Ovary (tissue), 10 donors: ENCODE measurements at regions of chr1 and their contacts with region 1.

Region 1: GRCh38 chr1:51768971-51769588 is 109.4 kb downstream of the NRDC start:
- DNase-seq: peak in 2 of 5 donors; percentile 18 to 57
- H3K4me3 ChIP-seq: no peak overlapping the region
- H3K27ac ChIP-seq: no peak overlapping the region
- H3K4me1 ChIP-seq: peaks cover 3% of the 10 kb centered on the region
- H3K27me3 ChIP-seq: no peaks in the 10 kb centered on the region
- CTCF ChIP-seq: peak; percentile 69 to 81 (median 76)
- EP300 ChIP-seq: no peak
- POLR2A ChIP-seq: no peak

Region 2: GRCh38 chr1:51616901-51617708 is 152.0 kb before region 1 on chr1 and contains the start of gene OSBPL9:
- intact Hi-C with region 1: loop called (anchors 10 kb)
- DNase-seq: peak; percentile 91 to 93 (median 91)
- H3K4me3 ChIP-seq: peak within 1 kb of the TSS; percentile 85
- H3K27ac ChIP-seq: peak within 1 kb of the TSS; percentile 89 to 90
- H3K4me1 ChIP-seq: peaks cover 7% of the 10 kb centered on the region
- H3K27me3 ChIP-seq: no peaks in the 10 kb centered on the region
- CTCF ChIP-seq: no peak
- EP300 ChIP-seq: no peak
- POLR2A ChIP-seq: peak; percentile 92
- total RNA-seq, gene OSBPL9: 53.1 to 92.4 (median 72.6) TPM

Region 3: GRCh38 chr1:51627678-51628077 is 141.4 kb before region 1 on chr1:
- intact Hi-C with region 1: loop called in 3 of 4 experiments (anchors 10 kb)
- DNase-seq: no peak
- H3K4me3 ChIP-seq: no peak overlapping the region
- H3K27ac ChIP-seq: no peak overlapping the region
- H3K4me1 ChIP-seq: peaks cover 7% of the 10 kb centered on the region
- H3K27me3 ChIP-seq: no peaks in the 10 kb centered on the region
- CTCF ChIP-seq: peak in 2 of 3 donors; percentile 16 to 39
- EP300 ChIP-seq: no peak
- POLR2A ChIP-seq: no peak